ENCODE measurements at regions of chr3 and their contacts with region 1.

Region 1: GRCh38 chr3:188468662-188469061 is 314.7 kb downstream of the LPP start:
- DNase-seq: peak; percentile 29 to 83
- ATAC-seq: peak; percentile 33 to 72 (median 52)
- H3K4me3 ChIP-seq: no peak overlapping the region
- H3K27ac ChIP-seq: peak overlapping the region; percentile 48
- H3K4me1 ChIP-seq: peaks cover 31% of the 10 kb centered on the region
- H3K27me3 ChIP-seq: no peaks in the 10 kb centered on the region
- CTCF ChIP-seq: no peak

Region 2: DNA sequence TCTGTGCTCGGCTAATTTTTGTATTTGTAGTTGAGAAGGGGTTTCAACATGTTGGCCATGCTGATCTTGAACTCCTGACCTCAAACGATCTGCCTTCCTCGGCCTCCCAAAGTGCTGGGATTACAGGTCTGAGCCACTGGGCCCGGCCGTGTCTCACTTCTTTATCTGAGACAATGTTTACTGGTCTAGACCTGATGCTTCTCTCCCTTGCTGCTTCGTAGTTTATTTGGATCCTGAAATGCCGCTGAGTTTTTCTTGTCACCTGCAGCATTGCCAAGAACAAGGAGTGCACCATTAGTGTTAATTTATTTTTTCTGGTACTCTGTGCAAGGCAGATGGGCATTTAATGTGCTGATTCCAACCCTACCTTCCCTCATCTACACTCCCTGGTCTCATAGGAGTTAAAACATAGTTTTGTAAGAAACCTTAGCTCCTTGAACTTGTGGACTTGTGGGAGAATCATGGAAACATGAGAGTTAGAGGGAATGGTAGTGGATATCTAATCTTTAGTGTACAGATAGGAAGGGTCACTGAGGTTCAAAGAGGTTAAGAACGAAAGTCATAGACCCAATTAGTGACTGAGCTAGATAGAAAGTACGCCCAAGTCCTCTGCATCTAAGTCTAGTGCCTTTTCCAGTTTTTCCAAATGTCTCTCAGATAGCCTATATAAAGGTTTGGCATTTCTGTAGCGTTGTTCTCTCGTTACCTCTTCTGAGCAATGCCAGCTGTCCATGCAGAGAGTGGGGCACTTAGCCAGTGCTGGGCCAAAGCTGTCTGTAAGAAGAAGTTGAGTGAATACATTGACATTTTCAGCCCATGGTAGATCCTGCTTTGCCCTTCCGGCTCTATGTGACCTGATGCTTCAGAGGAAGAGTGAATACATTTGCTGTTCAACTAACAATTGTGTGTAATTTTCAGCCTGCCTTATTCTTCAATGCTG is 70.6 kb before region 1 on chr3:
- intact Hi-C with region 1: loop called in 1 of 2 experiments (anchors 5 kb)
- DNase-seq: no peak
- ATAC-seq: peak; percentile 48 to 74 (median 66)
- H3K4me3 ChIP-seq: peak overlapping the region; percentile 52
- H3K27ac ChIP-seq: peak overlapping the region; percentile 73
- H3K4me1 ChIP-seq: peaks cover 33% of the 10 kb centered on the region
- H3K27me3 ChIP-seq: no peaks in the 10 kb centered on the region
- CTCF ChIP-seq: no peak

Region 3: DNA sequence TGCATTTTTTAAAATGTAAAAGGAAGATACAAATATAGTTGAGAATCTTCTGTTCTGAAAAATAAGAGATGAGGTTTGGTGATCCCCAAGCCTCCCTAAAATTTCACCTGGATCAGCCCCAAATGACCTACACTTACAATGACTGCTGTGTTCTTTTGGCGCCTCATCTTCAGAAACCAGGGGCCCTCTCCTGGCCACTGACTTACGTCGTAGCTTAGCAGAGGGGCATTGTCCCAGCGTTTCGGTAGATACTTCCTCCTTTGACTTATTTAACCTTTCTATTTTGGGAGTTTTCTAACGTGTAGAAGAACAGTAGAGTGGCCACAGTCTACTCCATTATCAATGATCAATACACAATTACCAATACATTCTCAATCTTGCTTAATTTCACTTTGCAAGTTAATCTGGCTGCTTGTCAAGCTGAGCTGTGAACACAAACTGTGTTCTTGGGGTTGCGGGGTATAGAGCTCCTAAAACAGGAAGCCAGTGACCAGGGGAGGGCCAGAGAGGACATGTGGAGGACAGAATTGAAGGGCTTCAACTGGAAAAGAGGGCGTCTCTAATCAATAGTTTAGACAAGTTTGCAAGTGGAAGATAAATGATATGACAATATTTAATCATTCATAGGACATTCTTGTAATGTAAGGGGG is 104.8 kb after region 1 on chr3:
- intact Hi-C with region 1: no loop called
- DNase-seq: no peak
- ATAC-seq: no peak
- H3K4me3 ChIP-seq: no peak overlapping the region
- H3K27ac ChIP-seq: no peak overlapping the region
- H3K4me1 ChIP-seq: peaks cover 40% of the 10 kb centered on the region
- H3K27me3 ChIP-seq: no peaks in the 10 kb centered on the region
- CTCF ChIP-seq: no peak

Measured in psoas muscle (tissue), 8 donors.